ENCODE measurements at regions of chr3 and their contacts with region 1.

Region 1: GRCh38 chr3:15377961-15378791 is 45.8 kb upstream of the SH3BP5 start:
- DNase-seq: peak; percentile 61
- H3K4me3 ChIP-seq: no peak overlapping the region
- CTCF ChIP-seq: peak; percentile 69

Region 2: DNA sequence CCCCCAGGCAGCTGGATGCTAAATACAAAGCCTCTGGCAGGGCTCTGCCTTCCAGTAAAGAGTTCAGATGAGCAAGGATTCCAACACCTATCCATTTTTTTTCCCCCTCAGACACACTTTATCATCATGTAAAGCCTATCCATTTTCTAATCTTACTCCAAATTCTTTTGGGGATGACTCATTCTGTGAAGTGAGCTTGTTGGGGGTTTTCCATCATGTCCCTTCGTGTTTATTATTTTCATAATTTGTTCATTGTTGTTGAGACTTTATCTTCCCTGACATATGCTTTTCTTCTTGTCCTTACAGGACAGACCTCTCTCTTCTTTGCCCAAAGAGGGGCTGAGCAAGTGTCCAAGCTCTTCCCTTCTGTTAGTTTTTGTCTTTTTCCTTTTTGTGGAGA is 11.1 kb before region 1 on chr3:
- CTCF ChIA-PET with region 1: interaction called, 20 read pairs
- POLR2A ChIA-PET with region 1: no interaction called
- DNase-seq: no peak
- H3K4me3 ChIP-seq: no peak overlapping the region
- CTCF ChIP-seq: no peak